ENCODE measurements at regions of chr9 and their contacts with region 1.

Region 1: GRCh38 chr9:126781186-126782052 is 23.4 kb upstream of the ZBTB43 start:
- DNase-seq: peak; percentile 50 to 86
- ATAC-seq: peak; percentile 89

Region 2: DNA sequence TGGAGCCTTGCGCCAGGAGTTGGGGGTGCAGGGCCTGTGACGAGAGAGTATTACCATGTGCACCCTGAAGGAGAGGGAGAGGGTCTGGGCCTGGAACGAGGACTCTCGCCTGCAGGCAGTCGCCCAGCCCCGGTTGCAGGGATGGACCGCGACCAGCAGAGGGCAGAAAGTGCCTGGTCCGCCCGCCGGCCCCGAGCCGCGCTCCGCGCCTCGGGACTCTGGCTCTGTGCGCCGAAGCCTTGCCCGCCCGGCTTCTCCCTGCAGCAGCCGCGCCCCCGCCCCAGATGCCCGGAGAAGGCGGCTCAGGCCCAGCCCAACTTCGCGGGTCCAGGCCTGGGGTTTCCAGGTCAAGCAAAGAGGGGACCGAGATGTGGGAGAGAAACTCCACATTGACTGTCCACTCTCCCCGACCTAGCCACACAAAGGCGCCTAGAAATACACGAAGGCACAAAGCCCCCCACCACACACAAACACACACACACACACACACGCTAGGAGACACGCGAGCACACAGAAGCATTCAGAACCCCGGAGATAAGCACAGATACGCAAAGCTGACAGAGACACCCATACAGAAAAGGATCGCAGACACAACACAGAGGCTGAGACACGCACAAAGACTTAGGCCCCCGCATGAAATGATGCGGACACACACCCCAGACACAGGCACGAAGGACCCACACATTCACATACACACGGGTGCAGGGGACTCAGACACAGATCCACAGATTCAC is 169.7 kb before region 1 on chr9:
- intact Hi-C with region 1: loop called in 1 of 2 experiments (anchors 10 kb)
- DNase-seq: peak; percentile 42 to 79
- ATAC-seq: peak; percentile 87

Region 3: GRCh38 chr9:126704873-126705766 is 76.3 kb before region 1 on chr9:
- intact Hi-C with region 1: loop called (anchors 5 kb)
- DNase-seq: peak; percentile 46 to 81
- ATAC-seq: peak; percentile 76